SK-N-SH (cell line): ENCODE measurements at regions of chr3 and their contacts with region 1.

Region 1: GRCh38 chr3:113912552-113913236 is 35.1 kb upstream of the ZDHHC23 start:
- DNase-seq: peak; percentile 40
- H3K4me3 ChIP-seq: no peak overlapping the region
- H3K27ac ChIP-seq: no peak overlapping the region
- H3K4me1 ChIP-seq: peaks cover 0 to 4% of the 10 kb centered on the region in 2 experiments; a peak in 1 of 4 replicates
- H3K27me3 ChIP-seq: no peaks in the 10 kb centered on the region
- CTCF ChIP-seq: peak; percentile 68
- EP300 ChIP-seq: no peak
- RAD21 ChIP-seq: peak; percentile 80

Region 2: DNA sequence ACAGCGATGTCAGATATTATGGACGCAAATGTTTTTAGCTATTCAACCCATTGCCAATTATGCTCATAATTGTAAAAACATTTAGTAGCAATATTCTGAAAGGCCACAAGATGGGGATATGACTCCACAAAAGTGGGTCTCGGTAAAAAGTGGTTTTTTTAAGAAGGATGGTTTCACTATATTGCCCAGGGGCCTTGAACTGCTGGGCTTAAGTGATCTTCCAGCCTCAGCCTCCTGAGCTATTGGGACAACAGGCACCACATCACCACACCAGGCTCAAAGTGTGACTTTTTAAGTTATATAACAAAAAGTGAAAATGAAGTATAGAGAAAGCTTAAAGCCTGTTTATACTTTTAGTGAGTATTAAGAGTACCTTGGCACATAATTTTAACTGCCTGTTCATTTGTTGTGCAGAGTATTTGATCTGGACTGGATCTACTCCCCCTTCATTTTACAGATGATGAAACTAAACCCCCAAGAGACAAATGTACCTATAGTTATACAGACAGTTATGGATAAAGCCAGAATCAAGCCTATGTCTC is 176.1 kb before region 1 on chr3:
- CTCF ChIA-PET with region 1: interaction called, 11 read pairs
- POLR2A ChIA-PET with region 1: no interaction called
- DNase-seq: peak; percentile 52
- H3K4me3 ChIP-seq: peak overlapping the region in 1 of 2 experiments; percentile 27; a peak in 1 of 4 replicates
- H3K27ac ChIP-seq: peak overlapping the region; percentile 42 to 50
- H3K4me1 ChIP-seq: no peaks in the 10 kb centered on the region; a peak in 2 of 4 replicates
- H3K27me3 ChIP-seq: no peaks in the 10 kb centered on the region
- CTCF ChIP-seq: peak; percentile 74
- EP300 ChIP-seq: no peak
- RAD21 ChIP-seq: peak; percentile 88

Region 3: DNA sequence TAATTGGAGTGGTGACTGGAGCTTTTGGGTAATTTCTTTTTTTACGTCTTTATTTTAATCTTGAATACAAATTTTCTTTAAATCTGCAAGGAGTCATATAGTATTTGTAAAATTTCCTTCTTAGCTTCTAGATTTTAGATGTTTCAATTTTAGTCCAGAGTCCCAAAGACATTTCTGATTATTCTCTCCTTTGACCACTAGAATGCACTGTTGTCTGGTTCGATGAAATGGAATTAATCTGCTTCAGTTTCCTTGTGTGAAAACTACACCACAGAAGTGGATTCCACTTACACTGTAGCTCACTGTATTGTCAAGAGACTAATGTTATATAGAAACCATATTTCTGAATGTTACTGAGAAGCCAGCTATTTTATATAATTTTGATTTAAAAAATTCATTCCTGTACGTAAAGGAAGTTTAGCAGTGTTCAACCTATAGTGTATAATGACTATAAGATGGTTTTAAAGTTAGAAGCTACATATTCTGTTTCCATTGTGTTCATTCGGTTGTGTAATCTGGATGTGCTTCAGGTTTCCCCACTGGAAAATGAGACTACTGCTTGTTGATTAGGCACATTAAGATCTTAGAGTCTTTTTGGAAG is 68.0 kb before region 1 on chr3:
- CTCF ChIA-PET with region 1: interaction called, 27 read pairs
- POLR2A ChIA-PET with region 1: no interaction called
- DNase-seq: peak; percentile 47
- H3K4me3 ChIP-seq: peak overlapping the region in 1 of 2 experiments; percentile 17; a peak in 1 of 4 replicates
- H3K27ac ChIP-seq: no peak overlapping the region
- H3K4me1 ChIP-seq: no peaks in the 10 kb centered on the region
- H3K27me3 ChIP-seq: no peaks in the 10 kb centered on the region
- CTCF ChIP-seq: peak; percentile 75
- EP300 ChIP-seq: no peak
- RAD21 ChIP-seq: peak; percentile 72

Region 4: GRCh38 chr3:113897373-113897777 is 15.3 kb before region 1 on chr3:
- CTCF ChIA-PET with region 1: interaction called, 10 read pairs
- POLR2A ChIA-PET with region 1: no interaction called
- DNase-seq: no peak
- H3K4me3 ChIP-seq: no peak overlapping the region
- H3K27ac ChIP-seq: no peak overlapping the region
- H3K4me1 ChIP-seq: no peaks in the 10 kb centered on the region
- H3K27me3 ChIP-seq: no peaks in the 10 kb centered on the region
- CTCF ChIP-seq: no peak
- EP300 ChIP-seq: no peak
- RAD21 ChIP-seq: no peak

Region 5: GRCh38 chr3:114011059-114011797 is 98.5 kb after region 1 on chr3:
- CTCF ChIA-PET with region 1: no interaction called
- POLR2A ChIA-PET with region 1: no interaction called
- DNase-seq: no peak
- H3K4me3 ChIP-seq: no peak overlapping the region
- H3K27ac ChIP-seq: no peak overlapping the region
- H3K4me1 ChIP-seq: no peaks in the 10 kb centered on the region
- H3K27me3 ChIP-seq: no peaks in the 10 kb centered on the region
- CTCF ChIP-seq: no peak
- EP300 ChIP-seq: no peak
- RAD21 ChIP-seq: no peak

Region 6: GRCh38 chr3:114034787-114035545 is 122.3 kb after region 1 on chr3:
- CTCF ChIA-PET with region 1: no interaction called
- POLR2A ChIA-PET with region 1: no interaction called
- DNase-seq: no peak
- H3K4me3 ChIP-seq: no peak overlapping the region
- H3K27ac ChIP-seq: 0 out of 4 replicates have a peak overlapping the region, but pooled peaks of 1 of the 2 experiments have one; percentile 0
- H3K4me1 ChIP-seq: no peaks in the 10 kb centered on the region
- H3K27me3 ChIP-seq: no peaks in the 10 kb centered on the region
- CTCF ChIP-seq: no peak
- EP300 ChIP-seq: no peak
- RAD21 ChIP-seq: no peak